ENCODE measurements at regions of chr11 and their contacts with region 1.

Region 1: GRCh38 chr11:64846998-64847666 is 2.7 kb upstream of the CDC42BPG start:
- DNase-seq: peak; percentile 89 to 94 (median 92)
- H3K4me3 ChIP-seq: no peak overlapping the region
- H3K27ac ChIP-seq: no peak overlapping the region
- H3K4me1 ChIP-seq: peaks cover 22% of the 10 kb centered on the region in 2 donors
- H3K27me3 ChIP-seq: no peaks in the 10 kb centered on the region
- CTCF ChIP-seq: peak; percentile 95 to 99 (median 97)
- POLR2A ChIP-seq: no peak

Region 2: DNA sequence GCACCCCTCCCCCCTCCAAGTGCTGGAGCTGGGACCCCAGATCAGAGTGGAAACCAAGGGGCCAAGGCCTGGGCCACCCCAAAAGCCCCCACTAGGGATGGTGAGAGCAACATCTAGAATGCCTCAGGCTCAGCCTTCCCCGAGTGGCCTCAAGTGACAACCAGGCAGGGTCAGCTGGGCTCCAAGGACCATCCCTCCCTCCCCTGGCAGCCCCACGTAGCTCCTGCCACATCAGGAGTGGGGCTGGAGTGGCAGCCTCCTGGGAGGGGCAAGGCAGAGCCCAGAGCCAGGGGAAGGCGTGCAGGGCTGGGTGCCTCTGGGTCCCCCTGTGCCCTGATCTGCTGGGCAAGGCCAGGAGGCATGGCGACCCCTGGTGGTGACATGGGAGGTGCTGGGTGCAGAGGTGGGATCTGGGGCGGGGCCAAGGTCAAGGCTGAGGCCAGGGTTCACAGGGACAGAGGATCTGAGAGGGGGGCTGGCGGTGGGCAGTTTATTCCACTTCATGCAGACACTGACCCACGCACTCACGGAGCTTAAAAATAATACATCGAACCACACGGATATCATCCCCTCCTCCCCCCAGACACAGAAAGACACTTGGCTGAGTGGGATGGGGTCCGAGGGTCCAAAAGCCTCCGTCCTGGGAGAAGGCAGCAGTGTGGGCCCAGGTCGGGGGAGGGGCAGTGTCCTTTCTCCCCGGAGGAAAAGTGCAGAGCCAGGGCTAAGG is 47.1 kb after region 1 on chr11:
- intact Hi-C with region 1: loop called (anchors 5 kb)
- DNase-seq: peak; percentile 80 to 90 (median 85)
- H3K4me3 ChIP-seq: no peak overlapping the region
- H3K27ac ChIP-seq: no peak overlapping the region
- H3K4me1 ChIP-seq: peaks cover 0 to 6% of the 10 kb centered on the region in 2 donors
- H3K27me3 ChIP-seq: no peaks in the 10 kb centered on the region
- CTCF ChIP-seq: peak; percentile 81 to 95 (median 89)
- POLR2A ChIP-seq: no peak

Region 3: GRCh38 chr11:64996710-64997380 is 149.7 kb after region 1 on chr11 and contains the start of gene BATF2:
- intact Hi-C with region 1: loop called in 1 of 2 experiments (anchors 10 kb)
- DNase-seq: peak; percentile 72 to 94 (median 89)
- H3K4me3 ChIP-seq: peak within 1 kb of the TSS in 2 of 4 donors; percentile 29 to 57
- H3K27ac ChIP-seq: peak within 1 kb of the TSS in 4 of 5 donors; percentile 48 to 81 (median 62)
- H3K4me1 ChIP-seq: peaks cover 15 to 16% of the 10 kb centered on the region in 2 donors
- H3K27me3 ChIP-seq: no peaks in the 10 kb centered on the region
- CTCF ChIP-seq: peak; percentile 35 to 78 (median 62)
- POLR2A ChIP-seq: peak; percentile 46 to 84
- total RNA-seq, gene BATF2: 0.67 to 34.5 (median 6.4) TPM

Region 4: GRCh38 chr11:65013692-65014145 is 166.6 kb after region 1 on chr11:
- intact Hi-C with region 1: loop called in 1 of 2 experiments (anchors 10 kb)
- DNase-seq: peak; percentile 88 to 93 (median 91)
- H3K4me3 ChIP-seq: peak overlapping the region in 3 of 4 donors; percentile 42 to 76 (median 55)
- H3K27ac ChIP-seq: peak overlapping the region; percentile 95 to 100 (median 98)
- H3K4me1 ChIP-seq: peaks cover 12 to 17% of the 10 kb centered on the region in 2 donors
- H3K27me3 ChIP-seq: no peaks in the 10 kb centered on the region
- CTCF ChIP-seq: peak in 4 of 6 experiments; percentile 55 to 93 (median 89)
- POLR2A ChIP-seq: peak; percentile 70 to 86

Region 5: GRCh38 chr11:65110354-65110861 is 263.3 kb after region 1 on chr11:
- intact Hi-C with region 1: no loop called
- DNase-seq: peak; percentile 85 to 97 (median 91)
- H3K4me3 ChIP-seq: no peak overlapping the region
- H3K27ac ChIP-seq: peak overlapping the region in 4 of 5 donors; percentile 69 to 89 (median 83)
- H3K4me1 ChIP-seq: peaks cover 38 to 47% of the 10 kb centered on the region in 2 donors
- H3K27me3 ChIP-seq: no peaks in the 10 kb centered on the region
- CTCF ChIP-seq: peak; percentile 98 to 100 (median 98)
- POLR2A ChIP-seq: peak; percentile 9 to 70

Measured in adrenal gland (tissue), 19 donors.